ENCODE measurements at regions of chr4 and their contacts with region 1.

Region 1: DNA sequence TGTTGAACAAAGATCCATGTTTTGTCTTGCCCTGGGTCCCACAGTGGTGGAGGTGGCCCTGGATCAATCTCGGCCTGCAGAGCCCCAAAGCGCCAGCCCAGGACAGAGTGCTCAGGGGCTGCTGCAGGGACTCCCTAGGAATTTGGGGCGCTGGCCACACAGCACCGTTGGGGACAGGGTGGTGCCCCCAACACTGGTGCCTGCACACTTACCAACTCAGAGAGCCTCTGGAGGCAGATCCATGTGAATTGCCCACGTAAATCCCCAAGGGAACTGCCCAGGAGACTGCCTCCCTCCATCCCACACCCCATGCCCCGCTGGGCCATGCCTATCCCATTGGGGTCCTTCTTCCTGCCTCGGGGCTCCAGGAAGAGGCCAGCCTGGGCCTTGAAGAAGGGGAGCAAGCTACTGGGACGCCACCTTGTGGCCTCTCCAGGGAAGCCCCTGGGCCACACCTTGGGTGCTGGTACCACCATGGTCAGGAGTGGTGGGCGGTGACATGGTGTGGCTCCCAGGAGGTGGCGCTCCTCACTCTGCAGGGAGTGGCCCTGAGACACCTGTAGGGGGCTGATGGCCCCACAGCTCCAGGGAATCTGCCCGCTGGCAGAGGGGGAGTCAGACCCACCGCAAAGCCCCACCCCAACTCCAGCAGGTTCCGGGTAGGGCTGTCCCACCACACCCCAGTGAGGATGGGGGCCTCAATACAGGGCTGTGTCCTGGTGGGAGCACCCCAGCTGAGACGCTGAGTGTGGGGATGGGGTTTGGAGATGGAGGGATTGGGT is 22.8 kb downstream of the CFAP99 start:
- DNase-seq: no peak
- ATAC-seq: peak; percentile 61

Region 2: GRCh38 chr4:2220016-2220630 is 221.5 kb before region 1 on chr4:
- intact Hi-C with region 1: loop called (anchors 1 kb)
- DNase-seq: peak; percentile 80
- ATAC-seq: peak; percentile 85

Region 3: DNA sequence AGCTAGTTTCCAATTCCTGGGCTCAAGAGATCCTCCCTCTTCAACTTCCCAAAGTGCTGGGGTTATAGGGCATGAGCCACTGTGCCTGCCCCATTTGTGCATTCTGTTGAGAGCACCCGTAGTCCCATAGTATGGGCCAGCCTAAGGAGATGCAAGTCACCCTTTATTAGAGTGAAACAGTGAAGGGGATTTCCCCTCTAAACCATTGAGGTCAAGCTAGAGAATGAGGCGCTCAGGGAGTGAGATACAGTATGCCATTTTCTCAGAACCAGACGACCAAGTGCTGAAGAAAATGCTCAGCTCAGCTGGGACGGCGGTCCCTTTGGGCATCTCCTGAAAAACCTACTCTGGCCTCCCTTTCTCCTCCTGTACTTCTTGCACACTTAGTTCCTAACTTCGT is 46.0 kb after region 1 on chr4:
- intact Hi-C with region 1: no loop called
- DNase-seq: no peak
- ATAC-seq: no peak

Measured in Right ventricle myocardium inferior (tissue), 1 donor.